ENCODE measurements at regions of chrX and their contacts with region 1.

Region 1: GRCh38 chrX:132219343-132219768 is at the start of gene RAP2C:
- DNase-seq: peak; percentile 63
- H3K4me3 ChIP-seq: peak within 1 kb of the TSS; percentile 62 to 65
- H3K27ac ChIP-seq: peak within 1 kb of the TSS; percentile 89 to 91
- H3K4me1 ChIP-seq: no peaks in the 10 kb centered on the region
- H3K27me3 ChIP-seq: no peaks in the 10 kb centered on the region
- CTCF ChIP-seq: peak in 3 of 4 experiments; percentile 33 to 61 (median 50)
- POLR2A ChIP-seq: no peak
- total RNA-seq, gene RAP2C: 9.2 to 19.0 TPM

Region 2: DNA sequence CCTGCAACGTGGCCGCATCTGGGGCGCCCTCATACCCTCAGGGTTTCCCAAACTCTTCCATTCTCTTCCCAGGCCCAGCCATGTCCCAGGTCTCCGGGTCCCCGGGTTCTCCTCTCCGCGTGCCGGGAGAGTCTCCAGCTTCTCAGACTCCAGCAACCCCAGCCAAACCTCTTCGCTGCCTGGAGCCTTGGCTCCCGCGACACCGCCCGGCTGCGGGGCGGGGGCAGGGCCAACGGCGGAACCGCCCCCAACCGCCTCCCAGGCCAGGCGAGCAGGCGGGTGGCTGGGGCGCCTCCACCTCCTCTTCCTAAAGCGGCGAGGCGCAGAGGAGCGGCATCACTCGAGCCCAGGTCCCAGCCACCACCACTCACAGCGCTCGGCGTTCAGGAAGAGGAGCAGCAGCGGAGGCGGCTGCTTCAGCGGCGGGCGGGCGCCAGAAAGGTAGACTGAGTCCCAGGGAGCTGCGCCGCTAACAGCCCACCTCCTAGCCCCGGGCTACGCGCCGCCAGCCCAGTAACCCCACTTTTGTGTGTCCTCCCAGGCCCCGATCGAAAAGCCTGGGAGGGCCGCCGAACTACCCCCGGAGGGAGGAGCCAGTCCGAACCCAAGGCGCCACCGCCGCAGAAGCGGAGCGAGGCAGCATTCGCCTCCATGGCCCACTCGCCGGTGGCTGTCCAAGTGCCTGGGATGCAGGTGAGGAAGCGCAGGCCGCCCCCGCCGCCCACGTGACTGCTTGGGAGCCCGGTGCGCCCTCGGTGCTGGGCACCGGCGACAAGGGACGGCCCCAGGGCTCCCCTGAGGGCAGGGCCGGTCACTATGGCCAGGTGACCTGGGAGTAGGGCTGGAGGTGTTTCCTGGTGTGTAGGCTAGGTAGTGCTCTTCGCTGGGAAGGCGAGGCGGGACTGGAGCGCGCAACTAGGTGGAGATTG is 196.1 kb before region 1 on chrX and contains the start of gene STK26:
- intact Hi-C with region 1: loop called (anchors 5 kb)
- DNase-seq: peak; percentile 62
- H3K4me3 ChIP-seq: peak within 1 kb of the TSS; percentile 49 to 52
- H3K27ac ChIP-seq: peak within 1 kb of the TSS; percentile 65 to 68
- H3K4me1 ChIP-seq: no peaks in the 10 kb centered on the region
- H3K27me3 ChIP-seq: no peaks in the 10 kb centered on the region
- CTCF ChIP-seq: no peak
- POLR2A ChIP-seq: peak; percentile 83
- total RNA-seq, gene STK26: 11.0 to 12.9 TPM

Region 3: DNA sequence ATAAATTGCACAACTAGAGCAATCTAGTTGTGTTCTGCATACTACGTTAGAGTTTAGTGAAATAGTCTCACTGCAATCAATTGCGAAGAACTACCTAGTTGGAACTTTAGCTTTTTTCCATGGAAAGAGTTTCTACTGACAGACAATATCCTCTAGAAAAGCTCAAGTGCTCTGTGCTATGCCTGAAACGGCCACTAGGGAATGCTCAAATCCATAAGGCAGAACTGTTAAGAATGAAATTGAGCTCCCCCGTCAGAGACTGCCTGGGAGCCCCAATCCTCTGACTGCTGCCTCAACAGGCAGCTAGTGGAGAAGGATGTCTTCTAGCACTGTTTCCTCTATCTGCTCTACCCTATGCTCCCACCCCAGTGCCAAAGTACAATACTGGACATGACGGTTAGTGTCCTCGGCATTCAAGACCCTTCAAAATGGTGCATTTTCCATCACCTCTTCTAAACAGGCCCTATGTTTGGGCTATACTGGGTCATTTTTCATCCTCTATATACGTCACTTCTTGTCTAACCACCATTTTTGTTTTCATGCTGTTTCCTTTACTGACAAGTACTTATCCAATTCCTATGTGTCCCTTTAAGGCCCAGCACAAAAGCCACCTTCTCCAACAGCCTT is 126.8 kb before region 1 on chrX:
- intact Hi-C with region 1: loop called (anchors 2 kb)
- DNase-seq: peak; percentile 32
- H3K4me3 ChIP-seq: no peak overlapping the region
- H3K27ac ChIP-seq: no peak overlapping the region
- H3K4me1 ChIP-seq: no peaks in the 10 kb centered on the region
- H3K27me3 ChIP-seq: no peaks in the 10 kb centered on the region
- CTCF ChIP-seq: peak; percentile 41 to 59 (median 54)
- POLR2A ChIP-seq: no peak